PC-3 (cell line): ENCODE measurements at regions of chr7 and their contacts with region 1.

Region 1: DNA sequence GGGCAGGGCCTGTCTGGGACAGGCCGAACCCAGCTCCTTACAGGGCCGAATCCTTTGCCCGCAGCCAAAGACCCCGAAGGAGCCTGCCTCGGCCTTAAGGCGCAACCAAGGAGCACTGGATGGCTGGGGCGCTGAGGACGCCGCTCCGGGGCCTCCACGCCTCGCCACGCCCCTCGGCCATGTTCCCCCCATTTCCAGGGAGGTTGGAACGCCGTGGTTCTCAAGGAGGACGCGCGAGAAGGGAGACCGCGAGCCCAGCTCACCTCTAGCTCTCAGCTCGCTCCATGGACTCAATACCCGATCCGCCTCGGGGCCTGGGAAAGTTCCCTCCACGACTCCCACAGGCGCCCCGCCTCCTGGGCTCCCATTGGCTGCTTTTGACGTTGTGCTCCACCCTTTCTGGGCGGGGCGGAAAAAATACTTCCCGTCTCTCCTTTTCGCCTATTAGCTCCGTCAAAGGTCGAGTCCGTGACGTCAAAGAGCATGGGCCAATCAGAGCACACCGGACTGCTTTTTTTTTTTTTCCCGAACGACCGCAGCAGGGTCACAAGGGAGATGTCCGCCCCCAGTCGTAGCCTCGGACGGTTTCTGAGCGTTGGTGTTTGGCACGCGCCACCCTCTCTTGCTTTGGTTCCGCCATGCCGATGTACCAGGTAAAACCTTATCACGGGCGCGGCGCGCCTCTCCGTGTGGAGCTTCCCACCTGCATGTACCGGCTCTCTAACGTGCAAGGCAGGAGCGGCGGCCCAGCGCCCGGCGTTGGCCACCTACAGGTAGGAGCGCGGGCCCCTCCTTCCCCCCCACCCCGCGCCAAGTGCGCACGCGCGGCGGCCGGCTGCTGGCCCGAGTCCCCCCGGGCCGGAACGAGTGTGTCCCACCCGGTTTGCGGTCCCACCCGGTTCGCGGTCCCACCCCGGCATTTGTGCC is 305.7 kb downstream of the TYW1 start:
- DNase-seq: peak; percentile 98
- ATAC-seq: peak; percentile 89
- H3K4me3 ChIP-seq: peak overlapping the region; percentile 96
- H3K27ac ChIP-seq: peak overlapping the region; percentile 86
- H3K4me1 ChIP-seq: peaks cover 3% of the 10 kb centered on the region
- H3K27me3 ChIP-seq: no peaks in the 10 kb centered on the region
- CTCF ChIP-seq: no peak

Region 2: DNA sequence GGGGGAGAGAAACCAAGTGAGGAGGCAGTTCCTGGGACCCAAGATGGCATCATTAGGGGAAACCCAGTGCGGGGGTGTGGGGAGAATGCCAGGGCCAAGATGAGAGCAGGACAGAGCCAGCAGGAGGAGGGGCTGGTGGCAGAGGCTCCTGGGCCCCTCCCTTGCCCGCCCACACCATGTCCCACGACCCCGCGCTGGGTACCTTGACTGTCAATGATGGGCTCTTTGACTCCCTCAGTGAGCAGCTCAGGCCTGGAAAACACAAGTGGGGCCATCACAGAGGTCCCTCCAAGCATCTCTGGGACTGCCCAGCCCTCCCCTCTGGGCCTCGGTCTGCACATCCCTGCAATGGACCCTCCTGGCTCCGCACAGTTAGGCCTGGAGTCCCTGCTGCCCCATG is 486.4 kb before region 1 on chr7:
- CTCF ChIA-PET with region 1: no interaction called
- POLR2A ChIA-PET with region 1: interaction called, 13 read pairs
- intact Hi-C with region 1: no loop called
- DNase-seq: no peak
- ATAC-seq: no peak
- H3K4me3 ChIP-seq: no peak overlapping the region
- H3K27ac ChIP-seq: no peak overlapping the region
- H3K4me1 ChIP-seq: no peaks in the 10 kb centered on the region
- H3K27me3 ChIP-seq: no peaks in the 10 kb centered on the region
- CTCF ChIP-seq: no peak

Region 3: DNA sequence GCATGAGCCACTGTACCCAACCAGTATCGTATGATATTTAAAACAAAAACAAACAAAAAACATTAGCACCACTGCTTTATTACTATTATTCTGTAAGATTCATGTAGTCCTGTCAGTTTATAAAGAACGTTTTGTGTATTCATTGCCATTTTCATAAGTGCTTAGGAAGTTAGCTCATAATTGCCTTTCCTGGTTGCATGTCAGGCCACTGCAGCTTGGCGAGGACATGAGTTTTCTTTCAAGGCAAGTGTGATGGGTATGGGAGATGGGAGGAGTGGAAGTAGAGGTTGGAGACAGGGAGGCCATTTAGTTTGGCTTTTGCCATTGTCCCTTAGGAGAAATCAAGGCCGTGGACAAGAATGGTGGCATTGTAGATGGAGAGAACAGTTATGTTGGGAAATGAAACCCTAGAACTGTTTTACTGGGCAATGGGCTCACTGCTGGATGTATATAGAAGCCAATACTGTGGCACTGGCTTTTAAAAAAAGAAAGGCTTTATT is 256.8 kb before region 1 on chr7:
- CTCF ChIA-PET with region 1: no interaction called
- POLR2A ChIA-PET with region 1: interaction called, 7 read pairs
- intact Hi-C with region 1: loop called (anchors 5 kb)
- DNase-seq: no peak
- ATAC-seq: no peak
- H3K4me3 ChIP-seq: no peak overlapping the region
- H3K27ac ChIP-seq: no peak overlapping the region
- H3K4me1 ChIP-seq: peaks cover 11% of the 10 kb centered on the region
- H3K27me3 ChIP-seq: no peaks in the 10 kb centered on the region
- CTCF ChIP-seq: no peak